ENCODE measurements at regions of chr1 and their contacts with region 1.

Region 1: DNA sequence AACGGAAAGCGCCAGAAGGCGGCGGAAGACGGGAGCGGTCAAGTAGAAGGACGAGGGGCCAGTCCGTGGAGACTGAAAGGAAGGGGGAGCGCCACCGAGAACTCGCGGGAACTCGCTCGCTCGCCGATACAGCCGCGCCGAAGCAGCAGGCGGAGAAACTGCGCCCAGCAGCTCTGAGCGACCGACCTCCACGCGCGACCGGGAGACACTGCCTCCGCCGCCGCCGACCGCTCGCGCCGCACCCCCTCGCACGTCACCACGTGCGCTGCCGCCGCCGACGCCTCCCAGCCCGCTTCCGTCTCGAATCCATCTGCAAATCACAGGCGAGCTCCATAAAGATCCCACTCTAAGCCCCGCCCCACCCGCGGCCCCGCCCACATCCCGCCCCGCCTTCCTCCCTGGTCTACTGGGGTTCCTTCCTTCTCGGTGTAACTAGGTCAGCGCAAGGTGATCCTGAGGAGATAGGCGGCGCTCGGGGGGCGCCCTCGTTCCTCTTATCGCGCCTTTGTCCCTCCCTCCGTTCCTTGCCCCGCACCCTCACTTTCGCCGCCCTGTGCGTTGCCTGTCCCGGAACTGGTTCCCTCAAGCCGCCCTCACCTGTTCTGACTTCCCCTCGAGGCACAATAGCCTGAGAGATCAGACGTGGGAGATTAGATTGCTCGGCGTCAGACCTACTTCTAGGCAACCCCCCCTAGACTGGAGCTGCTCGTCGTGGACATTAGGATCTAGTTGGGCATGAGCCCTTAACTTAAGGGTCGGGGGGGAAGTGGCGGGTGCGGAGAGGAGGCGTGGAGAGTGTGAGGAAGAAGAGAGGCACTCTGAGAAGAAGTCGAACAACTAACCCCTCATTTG is at the start of gene IVNS1ABP:
- DNase-seq: peak; percentile 92
- H3K4me3 Mint-ChIP-seq: peak within 1 kb of the TSS; percentile 94
- H3K27ac Mint-ChIP-seq: peak within 1 kb of the TSS; percentile 97
- H3K4me1 Mint-ChIP-seq: peaks cover 50% of the 10 kb centered on the region
- H3K27me3 Mint-ChIP-seq: no peaks in the 10 kb centered on the region
- total RNA-seq, gene IVNS1ABP: 207 and 225 TPM in 2 replicates

Region 2: GRCh38 chr1:185044981-185045813 is 272.1 kb before region 1 on chr1 and contains the start of gene RNF2:
- intact Hi-C with region 1: loop called (anchors 5 kb)
- DNase-seq: peak; percentile 65
- H3K4me3 Mint-ChIP-seq: peak within 1 kb of the TSS; percentile 89
- H3K27ac Mint-ChIP-seq: peak within 1 kb of the TSS; percentile 82
- H3K4me1 Mint-ChIP-seq: peaks cover 29% of the 10 kb centered on the region
- H3K27me3 Mint-ChIP-seq: peaks cover 15% of the 10 kb centered on the region
- total RNA-seq, gene RNF2: 24.1 and 24.4 TPM in 2 replicates

Region 3: DNA sequence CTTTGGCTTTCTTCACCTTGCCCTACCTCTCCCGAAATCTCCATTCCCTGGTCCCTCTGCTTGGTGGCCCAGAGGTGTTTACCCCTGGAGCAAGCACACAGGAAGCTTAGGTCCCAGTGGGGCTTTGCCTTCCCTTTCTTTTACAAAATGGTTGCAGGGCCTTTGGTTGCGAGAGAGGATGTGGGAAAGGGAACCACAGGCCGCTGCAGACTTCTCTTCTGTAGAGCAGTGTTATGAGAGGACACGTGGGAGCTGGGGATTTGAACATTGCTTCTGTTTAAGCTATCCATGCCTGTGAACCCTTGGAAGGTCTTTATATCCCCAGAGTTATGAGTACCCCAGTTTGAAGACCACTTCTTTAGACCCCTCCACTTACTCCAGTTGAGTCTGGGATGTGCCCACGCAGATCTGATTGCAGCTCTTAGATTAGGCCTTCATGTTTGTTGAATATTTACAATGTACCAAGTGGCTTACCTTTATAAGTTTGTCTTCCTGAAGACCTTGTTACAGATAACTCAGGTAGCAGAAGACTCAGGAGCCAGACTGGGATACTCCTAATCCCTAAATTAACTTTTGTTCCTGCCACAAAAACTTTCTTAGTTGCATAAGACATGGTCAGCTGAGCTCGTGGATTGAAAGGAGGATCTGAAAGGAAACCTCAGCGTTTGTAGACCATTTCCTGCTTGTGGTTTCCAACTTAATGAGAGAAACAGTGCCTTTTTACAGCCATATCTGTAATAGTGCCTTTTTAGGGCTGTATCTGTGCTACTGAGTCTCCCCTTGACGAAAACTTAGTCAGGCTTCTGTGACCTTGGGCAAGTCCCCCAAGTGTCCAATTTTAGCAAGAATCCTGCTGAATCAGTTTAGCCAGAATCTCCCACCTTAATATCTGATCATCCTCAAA is 21.7 kb after region 1 on chr1:
- intact Hi-C with region 1: loop called (anchors 1 kb)
- DNase-seq: peak; percentile 63
- H3K4me3 Mint-ChIP-seq: peak overlapping the region; percentile 13
- H3K27ac Mint-ChIP-seq: peak overlapping the region; percentile 78
- H3K4me1 Mint-ChIP-seq: peaks cover 43% of the 10 kb centered on the region
- H3K27me3 Mint-ChIP-seq: no peaks in the 10 kb centered on the region

Region 4: DNA sequence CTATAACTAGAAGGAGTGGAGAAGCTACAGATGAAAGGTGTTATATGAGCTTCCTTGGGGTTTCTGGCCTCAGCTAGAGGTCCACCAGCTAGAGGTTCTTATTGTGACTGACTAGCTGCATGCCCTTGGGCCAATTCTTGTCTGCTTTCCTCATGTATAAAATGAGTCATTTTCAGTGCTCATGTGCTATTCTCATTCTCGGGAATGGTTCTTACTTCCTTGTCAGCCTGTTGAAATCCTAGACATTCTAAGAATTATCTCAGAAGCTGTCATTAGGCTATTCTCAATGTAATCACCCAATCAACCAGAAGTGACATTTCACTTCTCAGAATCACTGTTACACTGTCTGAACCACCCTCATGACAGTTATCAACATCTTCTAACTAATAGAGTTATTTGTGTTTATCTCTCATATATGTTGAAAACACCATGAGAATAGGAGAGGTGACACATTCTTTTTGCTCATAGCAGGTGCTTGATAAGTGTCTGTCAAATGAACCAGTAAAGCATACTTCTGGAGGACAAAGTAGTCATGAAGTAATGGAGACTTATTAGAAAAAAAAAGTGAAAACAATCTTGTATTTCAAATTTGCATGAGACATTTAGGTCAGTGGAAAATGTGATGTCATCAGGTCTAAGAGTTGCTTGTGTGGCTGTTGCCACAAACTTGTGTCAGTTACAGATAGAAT is 122.6 kb after region 1 on chr1:
- intact Hi-C with region 1: loop called (anchors 1 kb)
- DNase-seq: peak; percentile 44
- H3K4me3 Mint-ChIP-seq: no peak overlapping the region
- H3K27ac Mint-ChIP-seq: no peak overlapping the region
- H3K4me1 Mint-ChIP-seq: peaks cover 27% of the 10 kb centered on the region
- H3K27me3 Mint-ChIP-seq: no peaks in the 10 kb centered on the region

Region 5: GRCh38 chr1:185636848-185637247 is 319.6 kb after region 1 on chr1:
- intact Hi-C with region 1: loop called (anchors 1 kb)
- DNase-seq: peak; percentile 61
- H3K4me3 Mint-ChIP-seq: peak overlapping the region; percentile 27
- H3K27ac Mint-ChIP-seq: peak overlapping the region; percentile 89
- H3K4me1 Mint-ChIP-seq: peaks cover 17% of the 10 kb centered on the region
- H3K27me3 Mint-ChIP-seq: no peaks in the 10 kb centered on the region

Region 6: GRCh38 chr1:186304982-186305949 is 988.0 kb after region 1 on chr1:
- intact Hi-C with region 1: loop called (anchors 5 kb)
- DNase-seq: no peak
- H3K4me3 Mint-ChIP-seq: peak overlapping the region; percentile 48
- H3K27ac Mint-ChIP-seq: peak overlapping the region; percentile 86
- H3K4me1 Mint-ChIP-seq: peaks cover 58% of the 10 kb centered on the region
- H3K27me3 Mint-ChIP-seq: no peaks in the 10 kb centered on the region